CD8-positive, alpha-beta T cell (primary cell): ENCODE measurements at regions of chr20 and their contacts with region 1.

Region 1: GRCh38 chr20:35454881-35455609 is at the start of gene CEP250:
- DNase-seq: peak; percentile 86 to 96 (median 95)
- ATAC-seq: peak; percentile 98
- H3K4me3 ChIP-seq: peak within 1 kb of the TSS; percentile 62 to 94
- H3K4me3 Mint-ChIP-seq: peak within 1 kb of the TSS; percentile 94
- H3K27ac ChIP-seq: peak within 1 kb of the TSS; percentile 52 to 94
- H3K27ac Mint-ChIP-seq: peak within 1 kb of the TSS; percentile 97
- H3K4me1 ChIP-seq: peaks cover 10% of the 10 kb centered on the region
- H3K4me1 Mint-ChIP-seq: peaks cover 21% of the 10 kb centered on the region
- H3K27me3 ChIP-seq: no peaks in the 10 kb centered on the region
- H3K27me3 Mint-ChIP-seq: no peaks in the 10 kb centered on the region
- CTCF ChIP-seq: no peak
- total RNA-seq, gene CEP250: 33.4 to 34.4 TPM

Region 2: GRCh38 chr20:35541783-35542588 is 86.9 kb after region 1 on chr20 and contains the start of gene ERGIC3:
- CTCF ChIA-PET with region 1: no interaction called
- POLR2A ChIA-PET with region 1: interaction called, 4 read pairs
- intact Hi-C with region 1: loop called (anchors 1 kb)
- DNase-seq: peak; percentile 93 to 98 (median 97)
- ATAC-seq: peak; percentile 97
- H3K4me3 ChIP-seq: peak within 1 kb of the TSS; percentile 81 to 94
- H3K4me3 Mint-ChIP-seq: peak within 1 kb of the TSS; percentile 89
- H3K27ac ChIP-seq: peak within 1 kb of the TSS; percentile 71 to 86
- H3K27ac Mint-ChIP-seq: peak within 1 kb of the TSS; percentile 89
- H3K4me1 ChIP-seq: peaks cover 14% of the 10 kb centered on the region
- H3K4me1 Mint-ChIP-seq: peaks cover 27% of the 10 kb centered on the region
- H3K27me3 ChIP-seq: no peaks in the 10 kb centered on the region
- H3K27me3 Mint-ChIP-seq: no peaks in the 10 kb centered on the region
- CTCF ChIP-seq: no peak
- total RNA-seq, gene ERGIC3: 149 TPM